Left cardiac atrium (tissue), 4 donors: ENCODE measurements at regions of chr3 and their contacts with region 1.

Region 1: GRCh38 chr3:67037615-67038014 is 39.5 kb downstream of the KBTBD8 start:
- DNase-seq: no peak
- ATAC-seq: peak; percentile 39 to 57

Region 2: GRCh38 chr3:66789580-66790237 is 247.9 kb before region 1 on chr3:
- intact Hi-C with region 1: no loop called
- DNase-seq: no peak
- ATAC-seq: peak in 1 of 2 donors; percentile 74

Region 3: GRCh38 chr3:66971891-66972551 is 65.6 kb before region 1 on chr3:
- intact Hi-C with region 1: loop called in 1 of 2 experiments (anchors 5 kb)
- DNase-seq: peak; percentile 72
- ATAC-seq: peak; percentile 97 to 98

Region 4: GRCh38 chr3:66989860-66990665 is 47.6 kb before region 1 on chr3:
- intact Hi-C with region 1: loop called (anchors 5 kb)
- DNase-seq: no peak
- ATAC-seq: peak; percentile 27 to 50

Region 5: DNA sequence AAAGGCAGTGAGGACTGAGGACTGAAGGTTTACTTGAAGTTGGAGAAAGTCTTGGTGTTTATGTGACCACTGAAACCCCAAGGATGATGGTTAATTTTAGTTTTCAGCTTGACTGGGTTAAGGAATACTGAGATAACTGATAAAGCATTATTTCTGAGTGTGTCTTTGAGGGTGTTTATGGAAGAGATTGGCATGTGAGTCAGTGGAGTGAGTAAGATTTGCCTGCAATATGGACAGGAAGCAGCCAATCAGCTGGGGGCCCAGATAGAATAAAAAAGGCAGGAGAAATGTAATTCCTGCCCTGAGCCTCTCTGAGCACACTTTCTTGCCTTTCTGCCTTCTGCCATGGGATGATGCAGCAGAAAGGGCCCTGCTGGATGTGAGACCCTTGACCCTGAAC is 52.9 kb after region 1 on chr3:
- intact Hi-C with region 1: no loop called
- DNase-seq: no peak
- ATAC-seq: no peak

Region 6: GRCh38 chr3:67401921-67402320 is 364.3 kb after region 1 on chr3:
- intact Hi-C with region 1: no loop called
- DNase-seq: no peak
- ATAC-seq: no peak

Region 7: GRCh38 chr3:67437086-67437485 is 399.5 kb after region 1 on chr3:
- intact Hi-C with region 1: no loop called
- DNase-seq: no peak
- ATAC-seq: no peak